Endothelial cell of umbilical vein (primary cell): ENCODE measurements at regions of chr18 and their contacts with region 1.

Region 1: DNA sequence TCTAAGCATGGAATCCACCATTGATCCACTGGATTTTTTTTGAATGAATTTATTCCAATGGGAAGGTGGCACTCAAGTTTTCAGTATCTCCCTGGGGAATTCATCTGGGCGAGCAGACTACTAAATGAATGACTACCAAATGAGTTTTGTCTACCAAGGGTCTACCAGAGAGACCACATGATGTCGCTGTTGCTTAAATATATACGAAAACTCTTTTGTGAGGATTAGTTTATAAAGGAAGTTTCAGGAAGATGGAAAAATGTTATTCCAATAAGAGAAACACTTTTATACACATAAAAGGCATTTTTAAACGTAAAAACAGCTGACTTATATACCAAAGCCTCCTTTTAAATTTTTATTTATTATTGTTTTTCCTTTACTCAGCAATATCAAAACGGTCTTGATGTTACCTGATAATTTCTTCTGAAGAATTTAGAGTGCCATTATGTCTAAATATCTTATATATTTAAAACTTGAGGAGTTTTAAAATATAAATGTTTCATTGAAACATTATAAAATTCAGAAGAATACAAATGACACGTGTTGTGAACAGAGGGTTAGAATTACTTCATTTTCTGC is 139.7 kb downstream of the HRH4 start:
- DNase-seq: peak; percentile 76
- H3K4me3 ChIP-seq: no peak overlapping the region
- H3K27ac ChIP-seq: no peak overlapping the region
- H3K4me1 ChIP-seq: no peaks in the 10 kb centered on the region
- H3K27me3 ChIP-seq: peaks cover 23 to 27% of the 10 kb centered on the region in 2 experiments
- CTCF ChIP-seq: peak; percentile 42 to 54
- POLR2A ChIP-seq: no peak

Region 2: GRCh38 chr18:24726727-24727492 is 126.7 kb after region 1 on chr18:
- CTCF ChIA-PET with region 1: interaction called, 71 read pairs
- POLR2A ChIA-PET with region 1: no interaction called
- dilution Hi-C with region 1: no loop called
- intact Hi-C with region 1: loop called (anchors 1 kb)
- DNase-seq: peak; percentile 77
- H3K4me3 ChIP-seq: peak overlapping the region in 1 of 3 experiments; percentile 10
- H3K27ac ChIP-seq: no peak overlapping the region
- H3K4me1 ChIP-seq: no peaks in the 10 kb centered on the region
- H3K27me3 ChIP-seq: peaks cover 18 to 21% of the 10 kb centered on the region in 2 experiments
- CTCF ChIP-seq: peak; percentile 77 to 87
- POLR2A ChIP-seq: no peak

Region 3: DNA sequence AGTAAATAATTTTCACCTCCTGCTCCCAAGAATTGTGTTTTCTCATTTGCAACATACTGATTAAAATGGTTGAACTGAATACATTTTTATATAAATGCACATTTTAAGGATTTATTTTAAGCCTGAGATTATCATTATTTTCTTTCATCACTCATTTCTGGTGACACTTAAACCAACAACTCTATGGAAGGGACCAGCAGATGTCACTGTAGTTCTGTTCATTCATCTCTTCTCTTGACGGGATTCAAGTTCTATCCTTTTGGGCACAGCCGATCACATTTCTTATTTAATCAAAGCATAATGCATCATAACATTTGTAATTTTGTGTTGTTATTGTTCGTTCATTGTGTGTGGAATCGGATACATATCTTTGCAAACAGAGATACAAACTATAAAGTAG is 278.1 kb after region 1 on chr18:
- CTCF ChIA-PET with region 1: interaction called, 3 read pairs
- POLR2A ChIA-PET with region 1: no interaction called
- dilution Hi-C with region 1: no loop called
- intact Hi-C with region 1: loop called (anchors 1 kb)
- DNase-seq: peak; percentile 75
- H3K4me3 ChIP-seq: no peak overlapping the region
- H3K27ac ChIP-seq: no peak overlapping the region
- H3K4me1 ChIP-seq: peaks cover 11% of the 10 kb centered on the region
- H3K27me3 ChIP-seq: no peaks in the 10 kb centered on the region
- CTCF ChIP-seq: peak; percentile 23 to 44
- POLR2A ChIP-seq: no peak

Region 4: DNA sequence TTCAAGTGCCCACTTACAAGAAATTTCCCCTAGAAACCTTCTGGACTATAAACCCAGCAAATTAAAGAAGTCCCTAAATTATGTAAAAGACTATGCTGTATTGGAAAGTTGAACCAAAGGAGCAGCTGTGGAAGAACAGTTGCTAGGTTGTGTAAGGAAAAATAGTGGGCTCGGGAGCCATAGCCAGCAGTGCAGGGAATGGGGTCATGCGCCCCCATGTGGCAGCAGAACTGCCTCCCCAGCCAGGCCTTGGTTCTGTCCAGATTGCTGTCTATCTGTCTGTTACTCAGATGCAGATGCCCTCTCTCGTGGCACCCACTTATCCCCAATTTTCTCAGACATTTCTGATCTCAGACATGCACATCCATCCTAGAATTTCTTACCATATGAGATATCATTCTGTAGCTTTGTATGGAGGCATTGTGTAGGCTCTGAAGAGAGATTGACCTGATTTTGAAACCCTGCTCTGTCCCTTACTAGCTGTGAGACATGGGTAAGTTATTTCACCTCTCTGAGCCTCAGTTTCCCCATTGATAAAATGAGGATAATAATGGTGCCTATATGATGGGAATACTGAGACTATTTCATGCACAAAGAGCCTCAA is 1231.9 kb after region 1 on chr18:
- CTCF ChIA-PET with region 1: interaction called, 4 read pairs
- POLR2A ChIA-PET with region 1: no interaction called
- dilution Hi-C with region 1: no loop called
- intact Hi-C with region 1: loop called (anchors 1 kb)
- DNase-seq: peak; percentile 73
- H3K4me3 ChIP-seq: no peak overlapping the region
- H3K27ac ChIP-seq: no peak overlapping the region
- H3K4me1 ChIP-seq: peaks cover 4% of the 10 kb centered on the region
- H3K27me3 ChIP-seq: peaks cover 0 to 5% of the 10 kb centered on the region in 2 experiments
- CTCF ChIP-seq: peak; percentile 83 to 96
- POLR2A ChIP-seq: no peak